ENCODE measurements at regions of chr3 and their contacts with region 1.

Region 1: DNA sequence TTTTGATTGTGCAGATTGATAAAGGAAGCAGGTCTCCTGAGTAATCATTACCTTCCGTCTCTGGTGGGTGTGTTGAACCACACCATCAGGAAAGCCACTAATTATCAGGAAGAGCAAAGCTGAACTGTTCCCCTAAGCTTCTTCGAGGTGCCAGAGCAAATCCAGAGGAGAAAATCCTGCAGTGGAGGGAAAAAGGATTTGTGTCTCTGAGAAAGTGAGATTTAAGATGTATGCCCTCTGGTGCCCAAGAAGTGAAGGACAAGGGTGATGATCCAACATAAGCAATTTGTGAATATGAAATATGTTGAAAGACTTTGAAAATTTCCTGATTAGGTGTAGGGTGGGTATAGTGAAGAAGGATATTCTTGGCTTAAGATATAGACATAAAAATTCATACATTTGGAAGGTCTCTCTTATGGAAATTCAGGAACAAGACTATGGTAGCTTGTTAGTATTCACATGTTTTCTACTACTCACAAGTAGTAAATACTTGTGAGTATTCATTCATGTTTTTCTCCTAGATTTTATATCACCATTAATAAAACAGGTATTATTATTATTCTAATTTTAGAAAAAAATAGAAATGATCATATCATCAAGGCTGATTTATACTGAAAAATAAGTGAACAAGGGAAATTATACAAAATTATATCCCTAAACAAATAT is 34.8 kb downstream of the COMMD2 start:
- DNase-seq: peak; percentile 51
- ATAC-seq: no peak
- H3K4me3 ChIP-seq: no peak overlapping the region
- H3K27ac ChIP-seq: no peak overlapping the region
- H3K4me1 ChIP-seq: peaks cover 27% of the 10 kb centered on the region
- H3K27me3 ChIP-seq: no peaks in the 10 kb centered on the region
- CTCF ChIP-seq: peak; percentile 76
- EP300 ChIP-seq: no peak
- POLR2A ChIP-seq: no peak
- RAD21 ChIP-seq: peak; percentile 52; the same call in 1 of the 2 replicates

Region 2: DNA sequence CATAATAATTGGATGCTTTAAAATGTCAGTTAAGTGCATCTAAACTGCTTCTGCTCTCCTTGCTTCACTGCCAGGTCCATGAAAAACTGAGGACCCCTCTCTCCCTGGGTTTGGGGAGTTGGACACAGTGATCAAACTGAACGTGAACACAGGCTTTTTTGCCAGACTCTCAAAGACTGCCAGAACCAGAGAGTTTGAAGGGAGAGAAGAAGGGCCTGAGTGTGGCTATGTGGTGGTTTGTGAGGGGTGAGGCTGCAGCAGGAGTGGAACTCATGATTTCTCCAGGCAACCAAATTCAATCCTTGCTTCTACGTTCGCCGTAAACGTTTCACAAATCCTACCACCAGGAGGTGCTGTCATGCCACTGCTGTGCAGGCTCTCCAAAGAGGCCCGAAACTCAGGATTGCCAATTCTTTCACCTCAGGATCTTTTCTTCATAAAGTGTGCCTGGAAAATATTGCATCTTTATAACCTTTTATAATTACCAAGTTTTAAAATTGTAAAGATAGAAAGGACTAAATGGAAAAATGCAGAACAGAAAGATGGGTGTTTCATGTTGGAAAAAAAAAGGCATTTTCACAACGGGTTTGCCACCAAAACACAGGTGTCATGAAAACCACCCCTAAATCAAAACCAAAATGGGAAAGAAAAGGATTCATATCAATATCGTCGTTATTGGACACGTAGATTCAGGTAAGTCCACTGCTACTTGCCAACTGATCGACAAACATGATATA is 223.3 kb before region 1 on chr3:
- CTCF ChIA-PET with region 1: interaction called, 11 read pairs
- POLR2A ChIA-PET with region 1: no interaction called
- in situ Hi-C with region 1: no loop called
- intact Hi-C with region 1: no loop called
- DNase-seq: peak; percentile 64
- ATAC-seq: peak; percentile 88
- H3K4me3 ChIP-seq: peak overlapping the region; percentile 46 to 65 (median 62)
- H3K27ac ChIP-seq: peak overlapping the region; percentile 66
- H3K4me1 ChIP-seq: peaks cover 47% of the 10 kb centered on the region
- H3K27me3 ChIP-seq: no peaks in the 10 kb centered on the region
- CTCF ChIP-seq: peak; percentile 91
- EP300 ChIP-seq: no peak
- POLR2A ChIP-seq: no peak; a peak in 1 of 4 replicates
- RAD21 ChIP-seq: peak; percentile 70

Region 3: DNA sequence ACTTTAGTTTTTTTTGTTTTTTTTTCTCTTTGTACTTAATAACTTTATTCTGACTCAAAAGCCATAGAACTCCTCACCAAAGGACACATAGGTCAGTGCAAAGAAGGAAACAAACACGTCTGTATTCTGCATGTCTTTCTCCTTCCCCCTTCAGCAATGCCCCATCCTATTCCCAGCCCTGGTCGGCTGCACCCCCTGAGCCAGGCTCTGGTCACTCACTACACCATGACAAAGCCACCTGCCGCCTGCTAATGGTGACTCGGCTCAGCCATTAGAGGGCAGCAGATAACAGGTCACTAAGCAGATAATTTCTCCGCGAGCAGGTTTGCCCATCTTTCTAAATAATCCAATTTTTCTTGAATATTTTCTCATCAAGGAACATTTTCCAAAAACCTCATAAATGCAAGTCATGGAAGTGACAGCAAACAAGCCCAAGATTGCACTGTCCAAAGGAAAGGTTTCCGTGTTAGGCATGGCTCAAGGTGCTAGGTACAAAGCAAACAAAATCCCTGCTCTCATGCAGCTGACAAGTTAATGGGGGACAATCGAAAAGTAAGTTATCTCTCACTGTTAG is 205.2 kb before region 1 on chr3:
- CTCF ChIA-PET with region 1: interaction called, 23 read pairs
- POLR2A ChIA-PET with region 1: no interaction called
- in situ Hi-C with region 1: no loop called
- intact Hi-C with region 1: loop called (anchors 1 kb)
- DNase-seq: peak; percentile 64
- ATAC-seq: peak; percentile 87
- H3K4me3 ChIP-seq: no peak overlapping the region; a peak in 1 of 6 replicates
- H3K27ac ChIP-seq: no peak overlapping the region
- H3K4me1 ChIP-seq: peaks cover 24% of the 10 kb centered on the region
- H3K27me3 ChIP-seq: no peaks in the 10 kb centered on the region
- CTCF ChIP-seq: peak; percentile 93
- EP300 ChIP-seq: no peak
- POLR2A ChIP-seq: no peak
- RAD21 ChIP-seq: peak; percentile 79

Region 4: GRCh38 chr3:149527531-149528339 is 189.8 kb before region 1 on chr3:
- CTCF ChIA-PET with region 1: interaction called, 12 read pairs
- POLR2A ChIA-PET with region 1: no interaction called
- in situ Hi-C with region 1: loop called (anchors 5 kb)
- intact Hi-C with region 1: loop called (anchors 1 kb)
- DNase-seq: no peak
- ATAC-seq: no peak
- H3K4me3 ChIP-seq: no peak overlapping the region
- H3K27ac ChIP-seq: peak overlapping the region; percentile 3
- H3K4me1 ChIP-seq: peaks cover 22% of the 10 kb centered on the region
- H3K27me3 ChIP-seq: no peaks in the 10 kb centered on the region
- CTCF ChIP-seq: 0 out of 2 replicates have a peak, but pooled peaks have one; percentile 19
- EP300 ChIP-seq: no peak
- POLR2A ChIP-seq: no peak
- RAD21 ChIP-seq: no peak

Region 5: GRCh38 chr3:149536429-149536828 is 181.1 kb before region 1 on chr3:
- CTCF ChIA-PET with region 1: interaction called, 12 read pairs
- POLR2A ChIA-PET with region 1: no interaction called
- in situ Hi-C with region 1: no loop called
- intact Hi-C with region 1: no loop called
- DNase-seq: no peak
- ATAC-seq: no peak
- H3K4me3 ChIP-seq: no peak overlapping the region
- H3K27ac ChIP-seq: no peak overlapping the region
- H3K4me1 ChIP-seq: peaks cover 37% of the 10 kb centered on the region
- H3K27me3 ChIP-seq: no peaks in the 10 kb centered on the region
- CTCF ChIP-seq: no peak
- EP300 ChIP-seq: no peak
- POLR2A ChIP-seq: no peak
- RAD21 ChIP-seq: no peak

Region 6: GRCh38 chr3:149572796-149573414 is 144.6 kb before region 1 on chr3:
- CTCF ChIA-PET with region 1: interaction called, 15 read pairs
- POLR2A ChIA-PET with region 1: interaction called, 3 read pairs
- in situ Hi-C with region 1: no loop called
- intact Hi-C with region 1: loop called (anchors 2 kb)
- DNase-seq: no peak
- ATAC-seq: no peak
- H3K4me3 ChIP-seq: no peak overlapping the region
- H3K27ac ChIP-seq: no peak overlapping the region
- H3K4me1 ChIP-seq: peaks cover 28% of the 10 kb centered on the region
- H3K27me3 ChIP-seq: no peaks in the 10 kb centered on the region
- CTCF ChIP-seq: no peak
- EP300 ChIP-seq: no peak
- POLR2A ChIP-seq: no peak
- RAD21 ChIP-seq: no peak

Region 7: DNA sequence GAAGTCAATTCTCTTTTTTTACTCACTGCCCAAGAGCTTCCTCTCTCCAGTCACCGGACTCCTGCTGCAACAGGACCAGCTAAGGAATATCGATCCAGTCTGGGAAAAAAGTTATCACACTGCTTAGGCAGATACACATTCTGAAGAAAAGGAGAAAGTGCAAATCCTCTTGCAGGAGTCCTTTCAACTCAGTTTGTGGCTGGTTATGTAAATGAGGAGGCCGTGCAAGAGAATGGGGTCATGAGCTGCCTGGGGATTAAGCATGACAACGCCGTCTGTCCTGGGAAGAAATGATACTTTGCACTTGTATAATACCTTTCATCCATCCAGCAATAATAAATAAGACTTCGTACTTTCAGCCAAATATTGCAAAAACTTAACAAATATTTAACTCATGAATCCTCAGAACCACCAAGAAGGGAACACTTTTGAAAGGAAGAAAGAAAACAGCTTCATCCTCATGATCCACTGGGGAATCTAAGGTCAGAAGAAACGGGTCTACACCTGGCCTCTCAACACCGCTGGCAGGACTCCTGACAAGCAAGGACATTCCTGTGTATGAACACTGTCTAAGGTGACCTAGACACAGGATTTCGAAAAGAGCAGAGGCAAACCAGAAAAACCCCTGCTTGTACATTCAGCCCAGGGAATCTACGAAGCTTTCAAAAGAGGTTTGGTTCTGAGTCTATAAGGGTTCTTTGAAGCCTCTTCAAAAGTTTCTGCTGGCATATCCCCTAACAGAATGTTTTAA is 46.6 kb before region 1 on chr3:
- CTCF ChIA-PET with region 1: interaction called, 3 read pairs
- POLR2A ChIA-PET with region 1: no interaction called
- in situ Hi-C with region 1: no loop called
- intact Hi-C with region 1: loop called (anchors 5 kb)
- DNase-seq: peak; percentile 47
- ATAC-seq: peak; percentile 79
- H3K4me3 ChIP-seq: peak overlapping the region; percentile 64 to 71 (median 65)
- H3K27ac ChIP-seq: peak overlapping the region; percentile 52
- H3K4me1 ChIP-seq: peaks cover 25% of the 10 kb centered on the region
- H3K27me3 ChIP-seq: no peaks in the 10 kb centered on the region
- CTCF ChIP-seq: 0 out of 2 replicates have a peak, but pooled peaks have one; percentile 4
- EP300 ChIP-seq: peak in 1 of 2 experiments; percentile 42; a peak in 1 of 4 replicates
- POLR2A ChIP-seq: no peak
- RAD21 ChIP-seq: no peak